ENCODE measurements at regions of chr2 and their contacts with region 1.

Region 1: DNA sequence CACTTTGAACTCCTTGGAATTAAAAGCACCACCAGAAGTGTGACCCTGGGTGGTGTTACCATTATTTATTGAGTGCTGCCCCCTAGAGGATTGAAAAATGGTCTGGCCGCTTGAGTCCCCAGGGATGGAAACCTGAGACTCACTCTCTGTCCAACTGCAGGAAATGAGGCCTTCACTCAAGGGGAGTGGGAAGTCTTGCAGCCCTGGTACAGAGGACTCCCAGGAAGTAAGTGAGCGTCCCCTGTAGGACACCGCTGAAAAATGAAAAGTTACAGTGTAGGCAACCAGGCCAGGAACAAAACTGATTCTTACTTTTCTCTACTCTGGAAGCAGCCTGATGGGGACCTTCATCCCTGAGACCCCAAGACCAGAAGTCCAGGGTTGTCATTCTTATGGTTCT is 2.2 kb upstream of the NRP2 start:
- DNase-seq: peak; percentile 41
- H3K4me3 Mint-ChIP-seq: peak overlapping the region; percentile 28
- H3K27ac Mint-ChIP-seq: no peak overlapping the region
- H3K4me1 Mint-ChIP-seq: peaks cover 47% of the 10 kb centered on the region
- H3K27me3 Mint-ChIP-seq: peaks cover 26% of the 10 kb centered on the region

Region 2: GRCh38 chr2:204325468-204325867 is 1354.6 kb before region 1 on chr2:
- intact Hi-C with region 1: loop called (anchors 5 kb)
- DNase-seq: peak; percentile 46
- H3K4me3 Mint-ChIP-seq: no peak overlapping the region
- H3K27ac Mint-ChIP-seq: no peak overlapping the region
- H3K4me1 Mint-ChIP-seq: peaks cover 6% of the 10 kb centered on the region
- H3K27me3 Mint-ChIP-seq: peaks cover 17% of the 10 kb centered on the region

Region 3: GRCh38 chr2:204967199-204967960 is 712.7 kb before region 1 on chr2:
- intact Hi-C with region 1: loop called (anchors 10 kb)
- DNase-seq: peak; percentile 72
- H3K4me3 Mint-ChIP-seq: peak overlapping the region; percentile 6
- H3K27ac Mint-ChIP-seq: peak overlapping the region; percentile 81
- H3K4me1 Mint-ChIP-seq: peaks cover 52% of the 10 kb centered on the region
- H3K27me3 Mint-ChIP-seq: no peaks in the 10 kb centered on the region

Region 4: DNA sequence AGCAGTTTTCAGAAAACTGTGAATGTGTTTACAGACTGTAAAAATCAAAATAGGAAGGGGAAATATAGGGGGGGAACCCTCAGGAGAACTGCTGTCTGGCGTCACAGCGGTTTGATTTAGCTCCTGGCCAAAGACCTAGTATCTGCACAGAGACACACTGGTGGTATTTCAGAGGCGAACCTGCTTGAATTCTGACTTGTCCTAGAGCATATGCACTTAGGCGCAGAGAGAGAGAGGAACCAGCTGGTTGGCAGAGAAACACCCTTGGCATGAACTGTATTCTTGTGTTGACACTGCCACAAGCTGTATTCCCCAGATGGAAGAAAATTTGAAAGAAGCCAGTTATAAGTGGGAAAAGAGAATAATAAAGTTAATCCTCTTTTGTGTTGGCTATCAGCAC is 504.2 kb before region 1 on chr2:
- intact Hi-C with region 1: no loop called
- DNase-seq: no peak
- H3K4me3 Mint-ChIP-seq: no peak overlapping the region
- H3K27ac Mint-ChIP-seq: no peak overlapping the region
- H3K4me1 Mint-ChIP-seq: no peaks in the 10 kb centered on the region
- H3K27me3 Mint-ChIP-seq: peaks cover 3% of the 10 kb centered on the region

Region 5: GRCh38 chr2:205323929-205324328 is 356.1 kb before region 1 on chr2:
- intact Hi-C with region 1: loop called (anchors 2 kb)
- DNase-seq: no peak
- H3K4me3 Mint-ChIP-seq: no peak overlapping the region
- H3K27ac Mint-ChIP-seq: no peak overlapping the region
- H3K4me1 Mint-ChIP-seq: no peaks in the 10 kb centered on the region
- H3K27me3 Mint-ChIP-seq: peaks cover 5% of the 10 kb centered on the region

Region 6: GRCh38 chr2:205596581-205596980 is 83.5 kb before region 1 on chr2:
- intact Hi-C with region 1: loop called (anchors 5 kb)
- DNase-seq: no peak
- H3K4me3 Mint-ChIP-seq: no peak overlapping the region
- H3K27ac Mint-ChIP-seq: no peak overlapping the region
- H3K4me1 Mint-ChIP-seq: no peaks in the 10 kb centered on the region
- H3K27me3 Mint-ChIP-seq: peaks cover 13% of the 10 kb centered on the region

Region 7: DNA sequence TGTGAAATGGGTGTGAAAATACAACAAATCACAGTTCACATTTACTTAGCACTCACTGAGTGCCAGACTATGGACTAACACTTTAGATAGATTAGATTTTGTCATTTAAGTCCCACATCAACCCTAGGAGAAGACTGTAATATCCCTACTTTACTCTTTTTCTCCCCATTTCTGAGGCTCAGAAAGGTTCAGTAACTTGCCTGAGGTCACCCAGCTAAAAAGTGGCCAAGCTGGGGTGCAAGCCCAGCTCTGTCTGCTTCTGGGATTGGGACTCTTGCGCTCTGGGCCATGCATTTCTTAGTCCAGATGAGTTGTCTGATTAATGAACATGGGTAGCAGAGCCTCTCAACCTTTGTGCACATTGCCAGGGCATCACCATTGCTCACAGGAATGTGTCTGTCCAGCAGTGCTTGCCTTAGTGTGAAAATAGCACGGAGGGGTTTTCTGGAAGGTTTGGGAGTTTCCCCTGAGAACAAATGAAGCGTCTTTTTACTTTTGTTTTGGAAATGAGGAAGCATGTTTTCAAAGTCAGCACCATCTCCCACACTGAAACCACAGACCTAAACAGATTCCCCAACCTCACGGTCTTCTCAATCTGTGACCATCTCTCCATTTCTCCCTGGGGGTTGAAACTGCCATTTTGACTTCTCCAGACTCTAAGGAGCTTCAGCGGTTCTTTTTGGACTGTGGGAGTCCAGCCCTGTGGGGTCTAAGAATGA is 34.1 kb after region 1 on chr2:
- intact Hi-C with region 1: loop called (anchors 2 kb)
- DNase-seq: no peak
- H3K4me3 Mint-ChIP-seq: no peak overlapping the region
- H3K27ac Mint-ChIP-seq: peak overlapping the region; percentile 77
- H3K4me1 Mint-ChIP-seq: peaks cover 84% of the 10 kb centered on the region
- H3K27me3 Mint-ChIP-seq: no peaks in the 10 kb centered on the region

Region 8: GRCh38 chr2:205848601-205849000 is 168.5 kb after region 1 on chr2:
- intact Hi-C with region 1: no loop called
- DNase-seq: no peak
- H3K4me3 Mint-ChIP-seq: no peak overlapping the region
- H3K27ac Mint-ChIP-seq: no peak overlapping the region
- H3K4me1 Mint-ChIP-seq: no peaks in the 10 kb centered on the region
- H3K27me3 Mint-ChIP-seq: peaks cover 20% of the 10 kb centered on the region